ENCODE measurements at regions of chr6 and their contacts with region 1.

Region 1: GRCh38 chr6:24428628-24429027 is 25.9 kb downstream of the MRS2 start:
- DNase-seq: no peak
- H3K4me3 ChIP-seq: no peak overlapping the region
- H3K27ac ChIP-seq: no peak overlapping the region
- H3K4me1 ChIP-seq: no peaks in the 10 kb centered on the region
- H3K27me3 ChIP-seq: no peaks in the 10 kb centered on the region
- CTCF ChIP-seq: no peak

Region 2: DNA sequence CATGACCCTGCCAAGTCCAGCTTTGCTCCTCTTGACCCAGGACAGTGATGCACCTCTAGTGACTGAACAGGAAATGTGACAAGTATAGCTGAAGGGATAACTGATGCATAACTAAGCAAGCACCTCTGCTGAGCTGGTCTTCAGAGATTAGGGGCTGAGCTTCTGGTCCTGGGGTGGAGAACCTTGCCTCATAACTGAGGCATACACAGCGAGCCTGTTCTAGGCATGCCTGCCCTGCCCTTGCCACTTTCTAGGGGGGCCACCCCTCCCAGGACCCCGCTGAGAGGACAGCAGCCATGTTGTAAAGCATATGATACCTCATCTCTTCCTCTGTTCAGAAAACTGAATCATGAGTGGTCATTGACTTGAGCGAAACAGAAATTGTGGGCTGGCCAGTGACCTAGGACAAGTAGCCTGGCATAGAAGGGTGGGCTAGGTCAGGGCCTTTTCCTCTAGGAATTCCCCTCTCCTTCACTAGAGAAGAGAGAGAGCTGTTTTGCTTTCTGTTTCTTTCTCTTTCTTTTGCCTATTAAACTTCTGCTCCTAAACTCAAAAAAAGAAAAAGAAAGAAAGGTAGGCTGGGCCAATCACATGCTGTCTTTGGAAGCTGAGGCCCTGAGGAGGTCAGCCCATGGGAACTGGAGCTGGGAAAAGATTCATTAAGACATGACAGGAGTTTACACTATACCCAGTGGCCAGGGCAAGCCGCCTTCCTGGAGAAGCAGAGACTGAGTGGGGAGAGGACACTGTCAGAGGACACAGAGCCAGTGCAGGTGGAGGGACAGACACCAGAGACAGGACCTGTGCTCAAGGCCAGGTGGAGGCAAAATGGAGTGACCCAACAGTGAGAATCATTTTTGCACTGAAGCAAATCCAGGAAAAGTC is 89.3 kb after region 1 on chr6:
- intact Hi-C with region 1: loop called (anchors 10 kb)
- DNase-seq: no peak
- H3K4me3 ChIP-seq: no peak overlapping the region
- H3K27ac ChIP-seq: no peak overlapping the region
- H3K4me1 ChIP-seq: no peaks in the 10 kb centered on the region
- H3K27me3 ChIP-seq: no peaks in the 10 kb centered on the region
- CTCF ChIP-seq: no peak

Measured in left ventricle myocardium inferior (tissue), 1 donor.